ENCODE measurements at regions of chr2 and their contacts with region 1.

Region 1: DNA sequence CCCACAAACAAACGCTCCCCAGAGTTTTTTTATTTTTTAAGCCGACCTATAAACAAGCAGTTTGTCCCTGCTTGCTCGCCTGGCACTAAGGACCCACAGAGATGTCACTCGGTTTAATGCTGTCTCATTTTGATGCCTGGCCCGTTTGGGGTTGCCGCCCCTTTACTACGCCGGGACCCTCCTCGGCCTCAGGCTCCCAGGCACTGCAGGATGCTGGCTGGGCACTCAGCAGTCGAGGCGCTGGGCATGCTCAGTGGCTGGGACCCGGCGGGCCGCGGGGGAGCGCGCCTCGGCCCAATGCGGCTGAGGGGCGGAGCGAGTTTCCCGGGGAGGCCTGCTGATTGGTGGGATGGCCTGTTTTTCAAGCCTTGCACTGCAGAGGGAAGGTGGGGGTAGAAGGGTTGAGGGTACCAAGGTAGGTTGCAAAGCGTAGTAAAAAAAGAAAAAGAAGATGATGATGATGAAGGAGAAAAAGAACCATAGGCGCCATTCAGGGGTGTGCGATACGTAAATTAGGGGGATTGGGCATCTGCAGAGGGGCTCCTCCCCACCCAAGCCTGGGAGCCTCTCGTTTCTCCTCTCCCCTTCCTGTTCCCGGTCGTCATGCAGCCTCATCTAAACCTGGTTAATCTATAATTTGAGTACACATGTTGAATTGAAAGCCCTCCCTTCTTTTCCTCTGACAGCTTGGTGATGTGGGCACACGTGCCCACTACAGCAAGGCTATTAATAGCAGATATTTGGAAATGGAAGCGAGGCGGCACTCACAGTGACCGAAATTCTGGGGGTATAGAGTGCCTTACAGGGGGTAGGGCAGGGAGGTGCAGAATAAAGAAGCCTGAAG is 1.5 kb upstream of the IRS1 start:
- DNase-seq: peak; percentile 87 to 88
- ATAC-seq: peak; percentile 76

Region 2: DNA sequence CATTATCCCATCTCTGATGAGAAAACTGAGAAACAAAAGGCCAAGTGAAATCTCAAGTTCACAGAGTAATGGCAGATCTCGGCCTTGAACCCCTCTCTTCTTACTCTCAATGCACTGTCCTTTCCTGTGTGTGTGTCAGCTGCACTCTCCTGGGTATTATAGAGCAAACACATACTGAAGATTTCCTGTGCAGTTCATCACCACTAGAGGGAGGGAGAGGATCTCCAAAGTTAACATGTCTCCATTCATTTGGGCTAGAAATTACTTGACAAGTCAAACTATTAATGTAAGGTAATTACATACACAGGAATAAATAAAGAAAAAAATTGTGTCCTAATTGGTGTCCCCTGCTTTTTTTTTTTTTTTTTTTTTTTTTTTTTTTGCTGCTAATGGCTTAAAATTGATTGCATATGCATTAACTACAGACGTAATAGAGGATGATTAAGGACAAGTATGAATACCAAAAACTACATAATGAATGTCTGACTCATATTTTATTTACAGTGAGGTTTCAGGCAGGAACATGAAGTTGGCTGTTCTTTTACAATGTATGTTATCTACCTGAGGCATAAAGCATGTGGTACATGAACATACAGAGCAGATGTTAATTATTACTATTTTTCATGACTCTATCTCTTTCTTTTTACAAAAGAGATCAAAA is 1132.4 kb before region 1 on chr2:
- intact Hi-C with region 1: loop called in 1 of 2 experiments (anchors 5 kb)
- DNase-seq: no peak
- ATAC-seq: peak; percentile 67

Region 3: DNA sequence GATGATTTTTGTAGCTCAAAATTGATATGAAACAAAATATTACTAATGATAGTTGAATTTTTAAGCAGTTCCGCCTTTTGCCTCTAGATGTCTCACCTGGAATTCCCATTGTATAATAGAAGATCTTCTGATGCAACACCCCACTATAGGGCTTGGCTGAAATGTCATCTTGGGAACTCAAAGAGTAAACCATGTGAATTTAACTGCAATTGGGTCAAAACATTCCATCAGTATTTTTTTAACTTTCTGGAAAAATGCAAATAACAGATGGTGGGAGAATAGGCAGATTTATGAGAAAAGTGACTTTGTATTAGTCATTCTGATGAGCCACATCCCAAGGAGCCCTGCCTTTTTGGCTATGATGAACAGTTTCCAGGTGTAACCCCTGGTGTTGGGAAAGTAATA is 911.7 kb before region 1 on chr2:
- intact Hi-C with region 1: loop called in 1 of 2 experiments (anchors 5 kb)
- DNase-seq: peak in 1 of 2 donors; percentile 2
- ATAC-seq: no peak

Region 4: GRCh38 chr2:226984750-226985582 is 183.8 kb after region 1 on chr2:
- intact Hi-C with region 1: loop called in 1 of 2 experiments (anchors 10 kb)
- DNase-seq: peak in 1 of 2 donors; percentile 21
- ATAC-seq: peak; percentile 66

Region 5: DNA sequence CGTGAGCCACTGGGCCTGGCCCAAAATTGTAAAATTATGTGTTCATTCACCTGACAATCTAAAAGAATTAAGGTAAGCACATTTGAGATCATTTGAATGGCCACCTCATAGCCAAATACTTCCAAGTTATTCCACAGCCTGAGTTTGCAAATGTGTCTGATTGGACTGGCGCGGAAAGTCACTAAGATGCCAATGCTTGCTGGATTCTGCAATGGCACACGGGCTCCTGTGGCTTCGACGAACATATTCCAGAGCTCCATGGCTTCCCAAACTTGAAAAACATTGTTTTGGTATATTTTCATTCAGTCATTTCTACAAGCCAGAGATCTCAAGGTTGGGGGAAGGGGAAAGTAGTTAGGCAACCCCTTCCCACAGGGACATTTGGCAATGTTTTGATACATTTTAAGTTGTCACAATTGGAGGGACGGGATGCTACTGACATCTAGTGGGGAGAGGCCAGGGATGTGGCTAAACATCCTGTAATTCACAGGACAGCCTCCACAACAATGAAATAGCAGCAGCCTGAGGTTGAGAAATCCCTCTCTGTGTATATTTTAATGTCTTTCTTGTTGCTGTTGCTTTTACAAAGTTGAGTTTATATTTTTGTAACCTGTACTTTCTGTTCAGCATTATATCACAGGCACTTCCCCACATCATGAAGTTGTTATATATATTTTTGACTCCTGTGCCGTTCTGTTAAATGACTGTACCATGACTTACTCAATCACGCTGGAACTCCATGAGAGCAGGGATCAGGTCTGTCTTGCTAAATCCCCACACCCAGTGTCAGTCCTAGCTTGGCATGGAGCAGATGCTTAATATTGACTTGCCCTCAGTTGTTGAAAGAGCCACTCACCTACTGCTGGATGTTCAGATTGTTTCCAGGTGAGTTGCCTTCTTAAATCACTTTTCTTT is 305.9 kb after region 1 on chr2:
- intact Hi-C with region 1: loop called in 1 of 2 experiments (anchors 10 kb)
- DNase-seq: peak in 1 of 2 donors; percentile 37
- ATAC-seq: peak; percentile 86

Measured in left colon (tissue), 2 donors.